Left ventricle myocardium superior (tissue), 1 donor: ENCODE measurements at regions of chr5 and their contacts with region 1.

Region 1: DNA sequence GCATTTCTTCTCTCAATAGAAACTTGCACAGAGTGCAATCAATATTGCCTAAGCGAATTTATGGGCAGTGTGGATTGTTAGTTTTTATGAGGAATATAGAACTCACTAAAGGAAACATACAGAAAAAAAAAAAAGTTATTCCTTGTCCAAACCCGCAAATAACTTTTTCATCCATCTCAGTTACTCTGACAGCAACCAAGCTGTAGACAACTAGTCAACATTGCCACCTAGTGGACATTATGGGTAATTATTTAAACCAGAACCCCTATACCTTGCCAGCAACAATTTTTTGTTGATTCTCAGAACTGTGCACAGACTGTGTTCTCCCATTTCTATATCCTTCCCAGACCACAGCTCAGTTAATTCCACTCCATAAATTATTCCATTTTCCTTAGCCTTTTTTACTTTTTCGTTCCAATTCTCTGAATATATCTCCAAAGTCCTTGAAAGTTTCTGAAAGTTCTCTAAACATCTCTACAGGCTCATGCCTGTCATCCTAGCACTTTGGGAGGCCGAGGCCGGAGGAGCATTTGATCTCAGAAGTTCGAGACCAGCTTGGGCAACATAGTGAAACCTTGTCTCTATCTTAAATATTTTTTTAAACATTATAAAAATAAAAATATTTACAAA is 2.6 kb upstream of the AFAP1L1 start:
- DNase-seq: no peak
- ATAC-seq: no peak

Region 2: DNA sequence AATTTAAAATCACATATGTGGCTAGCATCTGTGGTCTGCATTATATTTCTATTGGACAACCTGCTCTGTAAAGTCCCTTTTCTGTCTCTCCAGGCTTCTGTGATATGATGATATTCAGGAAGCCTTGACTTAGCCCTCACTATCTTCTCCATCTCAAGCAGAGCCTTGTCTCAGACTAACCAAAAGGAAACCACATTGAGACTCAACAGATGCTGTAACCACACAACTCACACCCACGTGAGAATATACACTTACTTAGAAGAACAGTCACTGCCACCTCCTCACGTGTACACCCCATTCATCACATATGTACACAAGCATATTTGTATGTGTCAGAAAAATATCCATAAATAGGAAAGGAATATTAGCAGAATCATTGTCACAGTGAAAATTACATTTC is 648.3 kb before region 1 on chr5:
- intact Hi-C with region 1: no loop called
- DNase-seq: no peak
- ATAC-seq: no peak

Region 3: DNA sequence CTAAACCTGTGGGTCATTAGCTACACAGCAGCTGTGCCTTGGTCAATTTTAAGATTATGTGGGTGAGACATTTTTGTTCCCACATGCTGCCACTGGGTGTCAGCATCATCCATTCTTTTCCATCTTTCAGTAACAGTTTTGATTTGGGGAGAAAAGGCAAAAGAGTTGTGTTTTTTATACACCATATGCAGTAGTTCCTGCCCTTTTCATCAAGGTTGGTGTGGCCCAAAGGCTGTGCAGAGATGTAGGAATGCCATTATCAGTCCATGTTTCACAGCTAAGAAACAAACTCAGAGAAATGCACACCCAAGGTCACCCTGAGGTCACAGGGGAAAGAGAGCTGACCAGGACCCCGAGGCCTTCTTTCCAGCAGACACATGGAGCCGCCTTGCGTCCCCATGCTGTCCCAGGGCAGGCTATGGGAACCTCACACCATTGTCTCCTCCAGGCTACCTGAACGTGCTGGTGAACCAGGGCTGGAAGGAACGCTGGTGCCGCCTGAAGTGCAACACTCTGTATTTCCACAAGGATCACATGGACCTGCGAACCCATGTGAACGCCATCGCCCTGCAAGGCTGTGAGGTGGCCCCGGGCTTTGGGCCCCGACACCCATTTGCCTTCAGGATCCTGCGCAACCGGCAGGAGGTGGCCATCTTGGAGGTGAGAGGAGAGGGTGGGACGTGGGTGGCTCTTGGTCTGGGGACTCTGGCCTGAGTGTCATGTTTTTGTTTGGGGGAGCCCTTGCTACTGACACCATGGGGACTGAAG is 48.4 kb after region 1 on chr5:
- intact Hi-C with region 1: loop called (anchors 10 kb)
- DNase-seq: no peak
- ATAC-seq: no peak

Region 4: GRCh38 chr5:149367249-149367971 is 98.4 kb after region 1 on chr5:
- intact Hi-C with region 1: loop called (anchors 10 kb)
- DNase-seq: no peak
- ATAC-seq: peak; percentile 52

Region 5: DNA sequence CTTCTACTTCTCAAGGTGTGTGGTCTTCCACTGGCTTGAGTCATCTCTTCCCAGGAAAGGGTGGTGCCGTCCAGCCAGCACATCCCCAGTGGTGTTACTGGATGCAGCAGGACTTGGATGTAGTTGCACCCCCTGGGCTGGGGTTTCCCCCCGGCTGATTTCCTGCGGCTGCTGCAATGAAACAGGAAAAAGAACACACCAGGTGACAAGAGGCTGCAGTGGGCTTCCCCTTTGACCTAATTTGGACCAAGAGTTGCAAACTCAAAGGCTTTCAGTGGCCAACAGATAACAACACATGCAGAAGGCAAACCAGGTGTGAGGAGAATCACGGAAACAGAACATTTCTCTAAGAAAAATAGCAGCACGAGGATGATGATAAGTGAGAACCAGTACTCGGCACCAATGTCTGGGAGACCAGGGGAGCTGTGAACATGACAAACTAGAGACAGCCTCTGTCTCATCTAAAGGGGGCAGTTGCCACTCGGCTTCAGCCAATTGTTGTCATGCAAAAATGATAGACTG is 591.8 kb after region 1 on chr5:
- intact Hi-C with region 1: no loop called
- DNase-seq: no peak
- ATAC-seq: no peak